ENCODE measurements at regions of chr17 and their contacts with region 1.

Region 1: GRCh38 chr17:64025732-64026294 is 5.4 kb upstream of the ICAM2 start:
- DNase-seq: peak; percentile 80
- CTCF ChIP-seq: peak; percentile 98

Region 2: GRCh38 chr17:63805591-63805990 is 220.2 kb before region 1 on chr17:
- CTCF ChIA-PET with region 1: no interaction called
- POLR2A ChIA-PET with region 1: no interaction called
- DNase-seq: no peak
- CTCF ChIP-seq: no peak

Region 3: DNA sequence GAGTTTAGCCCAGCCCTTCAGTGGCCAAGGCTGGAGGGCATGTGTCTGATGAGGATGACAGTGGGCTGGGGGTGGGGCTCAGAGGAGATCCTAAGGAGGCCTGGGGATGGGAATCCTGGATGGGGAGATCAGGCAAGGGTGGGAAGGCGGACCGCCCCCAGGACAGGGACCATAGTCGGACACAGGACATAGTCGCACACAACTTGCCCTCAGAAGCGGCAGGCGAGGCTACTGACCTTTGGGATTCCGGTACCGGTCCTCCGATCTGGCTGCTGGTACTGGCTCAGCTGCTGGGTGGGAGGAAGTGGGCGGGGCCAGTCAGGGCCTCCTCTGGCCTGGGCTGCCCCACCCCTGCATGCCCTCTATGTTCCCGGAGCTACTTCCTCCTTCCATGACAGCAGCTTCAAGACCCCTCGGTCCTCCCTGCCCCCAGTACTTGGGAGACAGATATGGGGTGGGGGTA is 94.7 kb before region 1 on chr17:
- CTCF ChIA-PET with region 1: interaction called, 11 read pairs
- POLR2A ChIA-PET with region 1: no interaction called
- DNase-seq: peak; percentile 84
- CTCF ChIP-seq: no peak

Region 4: DNA sequence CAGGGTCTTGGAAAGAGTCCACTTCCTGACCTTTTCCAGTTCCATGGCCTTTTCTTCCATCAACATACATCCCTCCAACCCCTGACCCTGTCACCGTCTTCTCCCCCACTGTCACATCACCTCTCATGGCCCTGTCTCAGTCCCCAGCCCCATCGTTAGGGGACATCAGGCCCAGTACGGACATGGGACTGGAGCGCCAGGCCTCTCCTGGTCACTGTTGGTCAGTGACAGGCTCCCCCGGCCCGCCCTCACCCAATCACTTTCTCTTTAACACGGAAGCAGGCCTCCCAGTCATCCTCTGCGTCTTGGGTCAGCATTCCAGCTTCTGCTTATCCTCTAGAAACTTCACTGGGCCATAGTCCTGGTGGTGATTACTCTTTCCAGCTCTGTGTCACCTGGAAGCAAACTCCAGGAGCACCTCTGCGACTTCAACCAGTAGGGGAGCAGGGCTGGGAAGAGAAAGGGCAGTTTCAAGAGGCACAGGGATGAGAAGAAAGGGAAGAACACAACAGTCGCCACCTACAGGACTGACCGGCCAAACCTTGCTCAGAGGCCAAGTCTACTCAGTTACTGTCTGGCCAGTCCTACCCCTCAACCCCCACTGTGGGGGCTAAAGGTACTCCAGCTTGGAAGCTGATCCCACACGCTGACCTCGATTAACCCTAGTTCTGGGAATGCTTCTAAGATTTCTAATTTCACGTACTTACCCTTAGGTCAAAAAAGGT is 10.5 kb after region 1 on chr17:
- CTCF ChIA-PET with region 1: interaction called, 169 read pairs
- POLR2A ChIA-PET with region 1: no interaction called
- DNase-seq: no peak
- CTCF ChIP-seq: peak; percentile 21

Region 5: DNA sequence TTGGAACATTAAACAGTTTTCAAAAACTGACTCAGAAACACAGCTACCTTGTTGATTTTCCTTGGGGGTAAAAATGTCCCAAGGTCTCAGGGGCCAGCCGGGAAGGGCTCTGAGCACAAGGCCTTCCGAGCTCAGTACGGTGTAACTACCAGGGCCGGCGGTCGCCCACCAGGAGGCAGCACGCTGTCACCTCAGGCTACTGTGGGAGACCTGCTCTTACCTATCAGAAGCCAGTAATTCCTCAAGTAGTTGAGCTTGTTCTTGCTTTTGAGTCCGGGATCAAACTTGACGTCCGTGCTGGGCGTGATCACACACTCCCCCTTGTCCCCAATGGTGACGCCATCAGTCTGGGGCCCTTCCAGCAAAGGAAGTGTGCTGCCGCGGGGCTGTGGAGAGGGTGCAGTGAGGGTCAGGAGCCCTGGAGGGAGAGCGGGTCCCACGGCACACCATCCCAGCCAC is 38.0 kb after region 1 on chr17:
- CTCF ChIA-PET with region 1: interaction called, 39 read pairs
- POLR2A ChIA-PET with region 1: no interaction called
- DNase-seq: no peak
- CTCF ChIP-seq: peak; percentile 72

Region 6: DNA sequence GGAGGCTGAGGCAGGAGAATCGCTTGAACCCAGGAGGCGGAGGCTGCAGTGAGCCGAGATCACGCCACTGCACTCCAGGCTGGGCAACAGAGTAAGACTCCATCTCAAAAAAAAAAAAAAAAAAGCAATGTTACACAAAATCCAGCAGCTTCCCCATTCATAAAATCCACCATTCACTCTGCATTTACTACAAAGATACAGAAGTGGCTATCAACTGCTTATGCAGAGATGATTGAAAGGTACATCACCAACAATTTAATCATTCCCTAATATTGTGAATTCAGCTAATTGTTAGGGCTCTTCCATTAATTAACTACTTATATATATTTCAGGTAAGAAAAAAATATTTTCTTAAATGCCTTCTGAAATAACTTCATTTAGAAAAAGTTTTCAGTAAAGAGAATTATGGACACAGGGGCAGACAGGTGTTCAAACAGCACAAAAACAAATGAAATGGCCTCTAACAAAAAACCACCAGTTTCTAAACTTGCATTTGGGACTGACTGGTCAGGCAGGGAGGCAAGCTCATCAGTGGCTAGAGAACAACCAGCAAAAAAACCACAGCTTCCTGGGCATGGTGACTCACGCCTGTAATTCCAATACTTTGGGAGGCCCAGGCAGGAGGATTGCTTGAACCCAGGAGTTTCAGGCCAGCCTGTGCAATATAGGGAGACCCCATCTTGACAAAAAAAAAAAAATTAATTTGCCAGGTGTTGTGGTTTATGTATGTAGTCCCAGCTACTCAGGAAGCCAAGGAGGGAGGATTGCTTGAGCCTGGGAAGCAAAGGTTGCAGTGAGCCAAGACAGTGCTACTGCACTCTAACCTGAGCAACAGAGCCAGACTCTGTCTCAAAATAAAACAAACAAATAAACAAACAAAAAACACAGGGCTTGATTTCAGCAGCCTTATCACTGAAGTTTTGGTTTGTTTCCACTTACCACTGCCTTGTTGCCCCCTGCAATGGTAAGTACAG is 77.9 kb after region 1 on chr17:
- CTCF ChIA-PET with region 1: interaction called, 11 read pairs
- POLR2A ChIA-PET with region 1: no interaction called
- DNase-seq: no peak
- CTCF ChIP-seq: no peak

Region 7: GRCh38 chr17:64138441-64138840 is 112.6 kb after region 1 on chr17:
- CTCF ChIA-PET with region 1: interaction called, 515 read pairs
- POLR2A ChIA-PET with region 1: interaction called, 9 read pairs
- DNase-seq: no peak
- CTCF ChIP-seq: no peak